PC-3 (cell line): ENCODE measurements at regions of chr4 and their contacts with region 1.

Region 1: DNA sequence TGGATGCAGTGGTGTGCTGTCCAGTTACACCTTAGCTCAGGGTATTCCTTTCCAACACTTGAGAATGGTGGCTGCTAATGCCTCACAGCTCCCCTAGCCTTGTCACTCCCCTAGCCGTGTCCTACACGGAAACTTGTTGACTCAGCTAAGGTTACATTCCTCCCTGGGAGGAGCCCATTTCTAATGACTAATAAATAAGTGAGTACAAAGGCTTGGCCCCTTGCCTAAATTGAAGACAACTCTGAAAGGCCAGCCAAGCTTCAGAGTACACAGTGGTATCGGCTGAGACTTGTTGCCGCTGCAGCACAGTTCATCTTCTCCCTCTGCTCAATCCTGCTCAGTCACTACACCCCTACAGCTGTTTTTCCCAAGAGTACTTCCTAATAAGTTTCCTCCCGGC is 21.2 kb upstream of the SLC25A31 start:
- DNase-seq: peak; percentile 96
- ATAC-seq: peak; percentile 98
- H3K4me3 ChIP-seq: peak overlapping the region; percentile 59
- H3K27ac ChIP-seq: peak overlapping the region; percentile 86
- H3K4me1 ChIP-seq: peaks cover 22% of the 10 kb centered on the region
- H3K27me3 ChIP-seq: no peaks in the 10 kb centered on the region
- CTCF ChIP-seq: no peak

Region 2: GRCh38 chr4:127698789-127699200 is 10.2 kb before region 1 on chr4:
- CTCF ChIA-PET with region 1: no interaction called
- POLR2A ChIA-PET with region 1: no interaction called
- intact Hi-C with region 1: loop called (anchors 1 kb)
- DNase-seq: peak; percentile 87
- ATAC-seq: peak; percentile 99
- H3K4me3 ChIP-seq: 0 out of 2 replicates have a peak overlapping the region, but pooled peaks have one; percentile 18
- H3K27ac ChIP-seq: peak overlapping the region; percentile 60
- H3K4me1 ChIP-seq: peaks cover 15% of the 10 kb centered on the region
- H3K27me3 ChIP-seq: no peaks in the 10 kb centered on the region
- CTCF ChIP-seq: no peak